Dendritic cell treated with granulocyte-macrophage colony-stimulating factor and Interleukin-4, amounts not matched to agents 40 ng/mL and 50 ng/mL, for 4 days (primary cell): ENCODE measurements at regions of chr15 and their contacts with region 1.

Region 1: GRCh38 chr15:75759416-75760130 is 46.9 kb upstream of the CSPG4 start:
- H3K4me3 Mint-ChIP-seq: peak overlapping the region; percentile 95
- H3K27ac Mint-ChIP-seq: peak overlapping the region; percentile 99
- H3K4me1 Mint-ChIP-seq: peaks cover 29% of the 10 kb centered on the region
- H3K27me3 Mint-ChIP-seq: no peaks in the 10 kb centered on the region

Region 2: GRCh38 chr15:75738647-75739331 is 20.8 kb before region 1 on chr15:
- intact Hi-C with region 1: loop called (anchors 1 kb)
- H3K4me3 Mint-ChIP-seq: peak overlapping the region; percentile 80
- H3K27ac Mint-ChIP-seq: peak overlapping the region; percentile 85
- H3K4me1 Mint-ChIP-seq: peaks cover 48% of the 10 kb centered on the region
- H3K27me3 Mint-ChIP-seq: peaks cover 14% of the 10 kb centered on the region